CD8-positive, alpha-beta memory T cell (primary cell): ENCODE measurements at regions of chr2 and their contacts with region 1.

Region 1: DNA sequence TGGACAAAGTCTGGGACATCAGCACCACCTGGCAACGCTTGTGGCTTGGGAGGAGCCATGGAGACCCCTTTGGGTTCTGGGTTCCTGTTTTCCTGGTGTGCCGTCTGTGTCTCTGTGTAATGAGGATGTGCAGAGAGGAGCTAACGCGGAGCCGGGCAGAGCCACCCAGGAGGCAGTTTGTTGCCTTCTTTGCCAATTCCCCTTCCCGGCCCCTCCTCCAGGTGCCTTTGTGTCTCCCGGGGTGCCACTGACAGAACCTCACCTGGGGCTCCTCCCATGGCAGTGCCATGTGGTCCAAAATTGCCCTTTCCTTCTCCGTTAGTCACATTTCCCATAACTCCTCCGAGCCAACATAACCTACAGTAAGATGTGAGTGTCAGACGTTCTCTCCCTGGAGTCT is 13.0 kb downstream of the POMC start:
- DNase-seq: no peak
- H3K4me3 ChIP-seq: no peak overlapping the region
- H3K4me3 Mint-ChIP-seq: no peak overlapping the region
- H3K27ac ChIP-seq: no peak overlapping the region
- H3K27ac Mint-ChIP-seq: no peak overlapping the region
- H3K4me1 ChIP-seq: no peaks in the 10 kb centered on the region
- H3K4me1 Mint-ChIP-seq: peaks cover 3 to 15% (median 6%) of the 10 kb centered on the region in 3 donors
- H3K27me3 ChIP-seq: no peaks in the 10 kb centered on the region
- H3K27me3 Mint-ChIP-seq: peaks cover 0 to 7% of the 10 kb centered on the region in 2 donors

Region 2: GRCh38 chr2:24993406-24994145 is 161.8 kb before region 1 on chr2:
- CTCF ChIA-PET with region 1: no interaction called
- POLR2A ChIA-PET with region 1: no interaction called
- DNase-seq: no peak
- H3K4me3 ChIP-seq: no peak overlapping the region
- H3K4me3 Mint-ChIP-seq: no peak overlapping the region
- H3K27ac ChIP-seq: no peak overlapping the region
- H3K27ac Mint-ChIP-seq: no peak overlapping the region
- H3K4me1 ChIP-seq: no peaks in the 10 kb centered on the region
- H3K4me1 Mint-ChIP-seq: no peaks in the 10 kb centered on the region
- H3K27me3 ChIP-seq: no peaks in the 10 kb centered on the region
- H3K27me3 Mint-ChIP-seq: peaks cover 10 to 20% of the 10 kb centered on the region in 2 donors

Region 3: DNA sequence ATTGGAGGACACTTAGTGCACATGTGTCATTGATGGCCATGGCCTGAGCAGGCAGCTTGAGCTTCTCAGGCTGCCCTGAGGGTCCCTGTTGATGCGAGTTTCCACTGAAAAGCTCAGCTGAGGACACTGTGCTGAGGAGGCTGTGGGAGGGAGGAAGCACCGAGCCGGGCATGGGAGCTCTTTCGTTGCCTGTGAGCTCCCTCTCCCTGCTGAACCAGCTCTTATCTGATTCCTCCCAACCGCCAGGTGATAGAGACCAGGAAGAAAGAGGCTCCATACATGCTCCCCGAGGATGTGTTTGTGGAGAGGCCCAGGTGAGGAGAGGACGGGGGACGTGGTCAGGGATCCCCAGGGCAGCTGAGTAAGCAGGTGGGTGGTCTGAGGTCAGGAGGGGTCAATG is 14.3 kb before region 1 on chr2:
- CTCF ChIA-PET with region 1: no interaction called
- POLR2A ChIA-PET with region 1: no interaction called
- DNase-seq: no peak
- H3K4me3 ChIP-seq: no peak overlapping the region
- H3K4me3 Mint-ChIP-seq: no peak overlapping the region
- H3K27ac ChIP-seq: no peak overlapping the region
- H3K27ac Mint-ChIP-seq: no peak overlapping the region
- H3K4me1 ChIP-seq: no peaks in the 10 kb centered on the region
- H3K4me1 Mint-ChIP-seq: peaks cover 0 to 5% (median 0%) of the 10 kb centered on the region in 3 donors
- H3K27me3 ChIP-seq: peaks cover 6% of the 10 kb centered on the region
- H3K27me3 Mint-ChIP-seq: peaks cover 10 to 26% of the 10 kb centered on the region in 2 donors

Region 4: DNA sequence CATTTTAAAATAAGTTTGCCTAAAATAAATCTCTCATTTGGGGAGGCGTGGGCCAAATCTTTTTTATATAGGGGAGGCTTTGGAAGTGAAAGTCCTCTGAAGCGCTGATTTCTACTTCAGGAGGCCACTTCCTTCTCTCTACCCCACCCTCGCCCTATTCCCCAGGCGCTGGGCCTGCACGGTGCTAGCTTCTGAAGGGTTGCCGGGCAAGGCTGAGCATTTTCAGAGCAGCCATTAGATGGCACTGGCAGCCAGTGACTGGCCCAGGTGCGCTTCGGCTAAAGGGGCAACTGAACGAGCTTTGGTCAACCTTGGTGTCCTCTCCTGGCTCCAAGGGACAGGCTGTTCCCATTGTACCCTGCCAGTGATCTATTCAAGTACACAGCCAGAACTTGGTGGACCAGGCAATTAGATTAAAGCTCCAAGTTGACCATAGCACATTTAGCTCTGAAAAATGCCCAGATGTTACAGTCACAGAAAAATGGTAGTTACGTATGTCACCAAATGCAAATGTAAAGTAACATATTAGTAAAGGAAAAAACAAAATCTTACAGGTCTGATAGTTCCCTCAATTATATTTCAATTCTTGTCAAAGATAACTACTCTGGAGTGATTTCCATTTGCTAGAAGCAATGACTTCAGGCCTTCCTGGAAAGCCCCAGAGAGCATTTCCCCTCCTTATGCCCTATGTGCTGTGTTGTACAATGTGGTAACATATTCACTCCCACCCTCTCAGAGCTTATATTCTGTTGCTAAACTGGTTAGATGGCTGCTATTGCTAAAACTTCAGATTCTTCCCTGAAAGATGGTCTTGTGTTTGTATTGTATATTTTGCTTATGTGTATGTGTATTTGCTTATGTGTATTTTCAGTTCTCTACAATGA is 10.8 kb after region 1 on chr2:
- CTCF ChIA-PET with region 1: interaction called, 11 read pairs
- POLR2A ChIA-PET with region 1: no interaction called
- DNase-seq: peak in 3 of 5 donors; percentile 29 to 63 (median 31)
- H3K4me3 ChIP-seq: no peak overlapping the region
- H3K4me3 Mint-ChIP-seq: peak overlapping the region in 2 of 7 donors; percentile 20 to 36
- H3K27ac ChIP-seq: no peak overlapping the region
- H3K27ac Mint-ChIP-seq: no peak overlapping the region
- H3K4me1 ChIP-seq: peaks cover 11% of the 10 kb centered on the region
- H3K4me1 Mint-ChIP-seq: peaks cover 12 to 31% (median 16%) of the 10 kb centered on the region in 3 donors
- H3K27me3 ChIP-seq: peaks cover 15% of the 10 kb centered on the region
- H3K27me3 Mint-ChIP-seq: peaks cover 36 to 46% of the 10 kb centered on the region in 2 donors